Mammary epithelial cell (primary cell): ENCODE measurements at regions of chr12 and their contacts with region 1.

Region 1: GRCh38 chr12:46124848-46125619 is 134.7 kb upstream of the SCAF11 start:
- DNase-seq: peak; percentile 74
- H3K4me3 ChIP-seq: peak overlapping the region in 1 of 3 experiments; percentile 32
- H3K27ac ChIP-seq: no peak overlapping the region
- H3K4me1 ChIP-seq: peaks cover 10% of the 10 kb centered on the region
- H3K27me3 ChIP-seq: no peaks in the 10 kb centered on the region
- CTCF ChIP-seq: peak; percentile 71 to 73

Region 2: GRCh38 chr12:46071769-46072624 is 53.0 kb before region 1 on chr12:
- CTCF ChIA-PET with region 1: interaction called, 11 read pairs
- dilution Hi-C with region 1: no loop called
- in situ Hi-C with region 1: no loop called
- intact Hi-C with region 1: loop called (anchors 1 kb)
- DNase-seq: peak; percentile 70
- H3K4me3 ChIP-seq: no peak overlapping the region
- H3K27ac ChIP-seq: peak overlapping the region; percentile 15
- H3K4me1 ChIP-seq: peaks cover 24% of the 10 kb centered on the region
- H3K27me3 ChIP-seq: no peaks in the 10 kb centered on the region
- CTCF ChIP-seq: peak; percentile 100

Region 3: GRCh38 chr12:46357438-46358324 is 232.6 kb after region 1 on chr12:
- CTCF ChIA-PET with region 1: interaction called, 14 read pairs
- dilution Hi-C with region 1: no loop called
- in situ Hi-C with region 1: no loop called
- intact Hi-C with region 1: no loop called
- DNase-seq: peak; percentile 87
- H3K4me3 ChIP-seq: no peak overlapping the region
- H3K27ac ChIP-seq: peak overlapping the region; percentile 13
- H3K4me1 ChIP-seq: peaks cover 28% of the 10 kb centered on the region
- H3K27me3 ChIP-seq: no peaks in the 10 kb centered on the region
- CTCF ChIP-seq: no peak

Region 4: DNA sequence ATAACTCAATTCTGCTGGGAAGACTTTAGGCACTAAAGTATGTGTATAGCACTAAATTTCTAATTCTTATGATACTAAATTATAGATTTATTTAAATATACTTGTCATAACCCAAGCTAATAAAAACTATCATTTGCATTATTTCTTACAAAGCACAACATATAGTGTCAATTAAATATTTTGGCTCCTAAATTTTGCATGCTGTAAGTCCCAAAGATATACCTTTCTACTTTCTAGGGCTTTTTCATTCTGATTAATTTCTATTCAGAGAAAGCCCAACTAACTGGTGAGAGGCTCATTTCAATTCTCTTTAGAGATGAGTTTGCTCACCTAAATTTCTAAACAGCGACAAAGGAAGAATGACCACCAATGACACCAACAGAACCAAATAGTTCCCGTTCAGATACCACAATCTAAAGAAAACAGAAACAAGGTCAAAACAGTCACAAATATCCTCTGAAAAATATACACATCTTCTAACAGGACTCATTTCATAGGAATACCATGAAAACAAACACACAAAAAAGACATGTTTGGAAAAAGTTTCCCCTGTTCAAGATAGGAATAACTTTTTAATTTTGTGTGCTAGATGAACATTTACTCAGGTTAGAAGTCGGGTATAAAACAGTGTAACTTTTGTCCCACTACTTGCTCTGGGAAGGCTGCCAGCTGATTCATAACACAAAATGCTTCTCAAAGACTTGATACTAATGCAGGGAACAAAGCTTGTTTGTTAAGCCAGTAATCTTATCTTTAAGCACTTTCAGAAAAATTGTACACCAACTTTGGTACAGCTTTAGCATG is 239.9 kb after region 1 on chr12:
- CTCF ChIA-PET with region 1: interaction called, 19 read pairs
- dilution Hi-C with region 1: no loop called
- in situ Hi-C with region 1: no loop called
- intact Hi-C with region 1: no loop called
- DNase-seq: peak; percentile 73
- H3K4me3 ChIP-seq: no peak overlapping the region
- H3K27ac ChIP-seq: peak overlapping the region; percentile 46
- H3K4me1 ChIP-seq: peaks cover 48% of the 10 kb centered on the region
- H3K27me3 ChIP-seq: no peaks in the 10 kb centered on the region
- CTCF ChIP-seq: no peak

Region 5: DNA sequence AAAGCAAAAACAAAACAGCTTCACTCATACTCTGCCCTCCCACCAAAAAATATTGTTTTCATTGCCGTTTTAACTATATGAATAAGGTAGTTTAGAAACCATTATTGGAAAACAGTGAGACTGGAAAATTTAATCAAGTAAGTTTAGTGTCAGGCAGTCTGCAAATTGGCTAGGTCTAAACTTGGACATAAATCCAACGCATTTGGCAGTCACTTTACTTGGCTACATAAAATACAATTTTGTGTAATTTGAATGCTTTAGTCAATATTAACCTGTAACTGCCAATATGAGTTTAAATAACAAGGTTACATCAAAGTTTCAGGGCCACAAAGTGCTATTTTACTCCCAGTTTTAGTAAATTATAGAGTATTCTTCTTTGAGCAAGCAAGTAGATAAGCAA is 449.8 kb after region 1 on chr12:
- CTCF ChIA-PET with region 1: interaction called, 25 read pairs
- dilution Hi-C with region 1: no loop called
- in situ Hi-C with region 1: no loop called
- intact Hi-C with region 1: no loop called
- DNase-seq: no peak
- H3K4me3 ChIP-seq: no peak overlapping the region
- H3K27ac ChIP-seq: no peak overlapping the region
- H3K4me1 ChIP-seq: peaks cover 13% of the 10 kb centered on the region
- H3K27me3 ChIP-seq: no peaks in the 10 kb centered on the region
- CTCF ChIP-seq: no peak

Region 6: GRCh38 chr12:46888568-46888967 is 763.5 kb after region 1 on chr12:
- CTCF ChIA-PET with region 1: interaction called, 10 read pairs
- dilution Hi-C with region 1: no loop called
- in situ Hi-C with region 1: no loop called
- intact Hi-C with region 1: no loop called
- DNase-seq: no peak
- H3K4me3 ChIP-seq: no peak overlapping the region
- H3K27ac ChIP-seq: no peak overlapping the region
- H3K4me1 ChIP-seq: peaks cover 7% of the 10 kb centered on the region
- H3K27me3 ChIP-seq: no peaks in the 10 kb centered on the region
- CTCF ChIP-seq: no peak

Region 7: GRCh38 chr12:47591361-47591791 is 1466.3 kb after region 1 on chr12:
- CTCF ChIA-PET with region 1: interaction called, 21 read pairs
- dilution Hi-C with region 1: no loop called
- in situ Hi-C with region 1: no loop called
- intact Hi-C with region 1: no loop called
- DNase-seq: no peak
- H3K4me3 ChIP-seq: no peak overlapping the region
- H3K27ac ChIP-seq: no peak overlapping the region
- H3K4me1 ChIP-seq: no peaks in the 10 kb centered on the region
- H3K27me3 ChIP-seq: no peaks in the 10 kb centered on the region
- CTCF ChIP-seq: no peak